ENCODE measurements at regions of chr1 and their contacts with region 1.

Region 1: GRCh38 chr1:88655685-88656299 is 28.3 kb upstream of the PKN2 start:
- DNase-seq: no peak
- H3K4me3 ChIP-seq: no peak overlapping the region
- H3K27ac ChIP-seq: no peak overlapping the region
- H3K4me1 ChIP-seq: no peaks in the 10 kb centered on the region
- H3K27me3 ChIP-seq: no peaks in the 10 kb centered on the region
- CTCF ChIP-seq: peak; percentile 49 to 72 (median 64)
- POLR2A ChIP-seq: no peak

Region 2: GRCh38 chr1:88877382-88877825 is 221.6 kb after region 1 on chr1:
- intact Hi-C with region 1: loop called (anchors 5 kb)
- DNase-seq: no peak
- H3K4me3 ChIP-seq: no peak overlapping the region
- H3K27ac ChIP-seq: no peak overlapping the region
- H3K4me1 ChIP-seq: peaks cover 2% of the 10 kb centered on the region
- H3K27me3 ChIP-seq: no peaks in the 10 kb centered on the region
- CTCF ChIP-seq: peak in 3 of 4 experiments; percentile 44 to 63 (median 53)
- POLR2A ChIP-seq: no peak

Measured in prostate gland (tissue), 2 donors.